ENCODE measurements at regions of chr17 and their contacts with region 1.

Region 1: GRCh38 chr17:43483674-43484372 is at the start of gene DHX8:
- DNase-seq: peak; percentile 97
- ATAC-seq: peak; percentile 96
- H3K4me3 ChIP-seq: peak within 1 kb of the TSS; percentile 93
- H3K27ac ChIP-seq: peak within 1 kb of the TSS; percentile 96
- H3K4me1 ChIP-seq: peaks cover 13% of the 10 kb centered on the region
- H3K27me3 ChIP-seq: no peaks in the 10 kb centered on the region
- CTCF ChIP-seq: peak; percentile 100; a peak in 5 of 6 replicates
- EP300 ChIP-seq: peak in 1 of 2 experiments; percentile 43; a peak in 1 of 4 replicates
- POLR2A ChIP-seq: peak; percentile 91
- RAD21 ChIP-seq: peak; percentile 99
- polyA plus RNA-seq, gene DHX8: 27.6 to 31.6 TPM

Region 2: DNA sequence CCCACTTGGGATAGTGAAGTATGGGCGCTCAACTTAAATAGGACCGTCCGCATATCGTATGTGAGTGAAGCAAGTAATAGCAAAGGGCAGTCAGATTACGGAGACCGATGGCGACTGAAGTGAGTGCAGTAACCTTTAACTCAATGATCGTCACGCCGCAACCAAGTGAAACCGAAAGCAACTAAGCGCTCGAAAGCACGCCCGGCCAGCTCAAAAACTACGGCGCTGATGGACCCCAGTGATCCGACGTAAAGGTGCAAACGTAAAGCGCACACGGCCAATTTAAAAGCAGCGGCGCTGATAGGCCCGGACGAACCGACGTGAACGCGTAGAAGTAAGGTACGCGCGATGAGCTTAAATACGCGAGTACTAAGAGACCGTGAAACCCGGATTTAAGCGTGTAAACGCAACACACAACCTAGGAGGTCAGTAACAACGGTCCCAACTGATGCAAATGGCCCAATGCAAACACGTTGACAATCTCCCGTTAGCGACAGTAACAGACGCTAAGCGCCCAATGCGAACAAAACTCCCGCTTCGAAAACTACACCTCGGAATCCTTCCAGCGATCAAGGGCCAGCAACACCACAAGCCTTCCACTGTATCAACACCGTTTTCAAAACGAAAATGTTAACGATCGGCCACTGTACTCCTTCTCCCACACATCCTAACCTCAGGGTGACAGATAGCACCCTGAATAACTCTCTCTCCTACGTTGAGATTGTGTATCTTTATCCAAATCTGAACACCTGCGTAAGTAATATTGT is 122.9 kb before region 1 on chr17:
- CTCF ChIA-PET with region 1: interaction called, 25 read pairs
- POLR2A ChIA-PET with region 1: interaction called, 3 read pairs
- RAD21 ChIA-PET with region 1: interaction called, 4 read pairs
- SMC1A ChIA-PET with region 1: interaction called, 13 read pairs
- in situ Hi-C with region 1: no loop called
- intact Hi-C with region 1: no loop called
- DNase-seq: peak; percentile 100
- ATAC-seq: peak; percentile 96
- H3K4me3 ChIP-seq: peak overlapping the region; percentile 73
- H3K27ac ChIP-seq: peak overlapping the region; percentile 93
- H3K4me1 ChIP-seq: no peaks in the 10 kb centered on the region
- H3K27me3 ChIP-seq: no peaks in the 10 kb centered on the region
- CTCF ChIP-seq: peak in 1 of 3 experiments; percentile 2; a peak in 1 of 6 replicates
- EP300 ChIP-seq: peak in 1 of 2 experiments; percentile 66; a peak in 2 of 4 replicates
- POLR2A ChIP-seq: peak; percentile 99
- RAD21 ChIP-seq: 0 out of 2 replicates have a peak, but pooled peaks have one; percentile 6

Region 3: DNA sequence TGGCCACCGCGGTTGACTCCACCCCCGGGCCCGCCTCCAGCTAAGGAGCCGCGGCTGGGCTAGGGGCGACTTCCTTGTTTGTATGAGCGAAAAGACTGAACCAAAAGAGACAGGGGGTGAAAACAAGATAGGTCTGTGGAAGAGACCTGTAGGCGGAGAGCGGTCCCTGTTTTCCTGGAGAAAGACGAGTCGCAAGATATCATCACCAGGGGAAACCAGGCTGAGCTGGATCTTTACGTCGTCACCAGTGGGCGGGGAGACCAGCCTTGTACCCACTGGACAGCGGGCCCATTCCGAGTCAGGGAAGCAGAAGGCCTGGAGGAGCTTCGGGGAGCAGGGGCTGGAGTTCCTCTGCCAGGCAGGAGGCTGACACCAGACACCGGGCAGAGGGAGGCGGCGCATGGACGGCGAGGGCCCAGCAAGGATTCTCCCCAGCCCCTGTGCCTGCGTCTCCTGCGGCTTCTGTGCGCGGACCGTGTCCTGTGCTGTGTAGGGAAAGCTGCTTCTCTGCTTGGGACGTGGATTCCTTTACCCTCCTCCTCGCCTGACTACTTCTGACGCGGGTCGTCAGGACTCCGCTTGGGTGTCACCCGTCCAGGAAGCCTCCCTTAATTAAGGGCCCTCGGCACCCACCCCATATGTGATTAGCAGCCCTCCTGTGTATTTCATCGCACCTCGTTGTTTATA is 95.3 kb before region 1 on chr17:
- CTCF ChIA-PET with region 1: interaction called, 248 read pairs
- POLR2A ChIA-PET with region 1: interaction called, 10 read pairs
- RAD21 ChIA-PET with region 1: interaction called, 79 read pairs
- SMC1A ChIA-PET with region 1: interaction called, 117 read pairs
- in situ Hi-C with region 1: loop called (anchors 5 kb)
- intact Hi-C with region 1: no loop called
- DNase-seq: peak; percentile 75
- ATAC-seq: peak; percentile 90
- H3K4me3 ChIP-seq: peak overlapping the region; percentile 70
- H3K27ac ChIP-seq: peak overlapping the region; percentile 97
- H3K4me1 ChIP-seq: peaks cover 4% of the 10 kb centered on the region
- H3K27me3 ChIP-seq: no peaks in the 10 kb centered on the region
- CTCF ChIP-seq: no peak
- EP300 ChIP-seq: peak in 1 of 2 experiments; percentile 15; a peak in 1 of 4 replicates
- POLR2A ChIP-seq: peak; percentile 79
- RAD21 ChIP-seq: no peak

Region 4: DNA sequence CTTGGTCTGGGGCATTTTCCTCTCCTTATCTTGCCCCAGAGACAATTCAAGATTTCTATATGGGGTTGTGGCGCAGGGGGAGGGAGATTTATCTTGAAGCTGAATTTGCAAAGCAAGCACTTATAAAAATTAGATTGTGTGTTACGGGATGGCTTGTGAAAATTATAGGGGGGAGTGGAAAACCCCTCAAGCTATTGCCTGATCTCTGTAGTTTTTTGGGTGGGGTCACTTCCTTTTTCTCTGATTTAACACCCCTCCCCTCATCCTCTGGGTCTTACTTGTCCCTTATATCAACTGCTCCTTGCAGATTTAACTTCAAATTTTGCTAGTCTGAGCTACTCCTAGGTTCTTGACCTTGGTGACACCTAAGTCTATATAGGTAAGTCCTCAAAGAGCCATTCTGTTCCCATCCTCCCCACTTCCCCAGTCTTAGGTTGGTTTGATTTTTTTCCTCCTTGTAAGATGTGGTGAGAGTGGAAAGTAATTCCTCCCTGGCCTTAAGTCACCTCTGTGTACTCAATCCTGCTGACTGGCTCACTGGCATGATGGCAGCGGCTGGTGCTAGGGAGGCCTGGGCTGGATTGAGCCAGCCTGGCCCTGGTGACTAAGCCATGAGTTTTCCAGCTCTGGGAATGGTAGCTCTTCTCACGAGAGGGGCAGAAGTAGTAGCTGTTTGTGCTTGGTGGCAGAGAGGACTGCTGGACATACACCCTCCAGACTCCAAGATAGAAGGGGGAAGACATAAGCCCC is 82.7 kb before region 1 on chr17:
- CTCF ChIA-PET with region 1: interaction called, 248 read pairs
- POLR2A ChIA-PET with region 1: interaction called, 5 read pairs
- RAD21 ChIA-PET with region 1: interaction called, 79 read pairs
- SMC1A ChIA-PET with region 1: interaction called, 117 read pairs
- in situ Hi-C with region 1: no loop called
- intact Hi-C with region 1: loop called (anchors 5 kb)
- DNase-seq: no peak
- ATAC-seq: no peak
- H3K4me3 ChIP-seq: no peak overlapping the region
- H3K27ac ChIP-seq: no peak overlapping the region
- H3K4me1 ChIP-seq: no peaks in the 10 kb centered on the region
- H3K27me3 ChIP-seq: no peaks in the 10 kb centered on the region
- CTCF ChIP-seq: no peak
- EP300 ChIP-seq: no peak
- POLR2A ChIP-seq: no peak
- RAD21 ChIP-seq: no peak

Region 5: DNA sequence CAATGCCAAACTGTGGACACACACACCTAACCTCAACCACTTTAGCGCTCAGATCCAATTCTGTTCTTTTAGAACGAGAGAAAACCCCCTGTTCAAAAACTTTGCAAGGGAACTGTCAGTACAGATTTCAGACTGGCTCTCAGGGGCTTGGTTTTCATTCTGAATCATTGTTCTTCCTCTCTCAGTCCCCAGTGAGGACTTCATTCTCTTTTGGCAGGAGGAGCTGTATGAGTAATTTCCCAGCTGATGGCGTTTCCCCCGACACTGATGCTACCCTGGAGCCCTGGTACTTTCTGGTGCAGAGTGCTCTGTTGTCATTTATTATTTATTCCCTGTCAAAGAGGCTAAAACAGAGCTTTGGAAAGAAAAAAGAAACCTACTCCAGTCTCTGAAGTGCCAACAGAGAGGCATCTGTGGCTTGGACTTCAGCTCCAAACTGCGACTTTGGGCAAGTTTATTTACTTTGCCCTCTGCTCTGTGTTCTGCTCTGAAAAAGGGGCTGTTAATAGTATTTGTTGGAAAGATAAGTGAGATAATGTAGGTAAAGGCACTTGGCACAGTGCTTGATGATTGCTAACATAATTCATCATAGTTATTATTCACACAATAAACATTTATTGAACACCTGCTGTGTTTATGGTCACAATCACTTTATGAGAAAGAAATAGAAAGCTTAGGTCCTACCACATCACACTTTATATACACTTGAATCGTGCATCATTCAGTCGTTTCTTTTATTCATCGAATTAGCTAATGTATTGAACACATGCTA is 34.0 kb after region 1 on chr17:
- CTCF ChIA-PET with region 1: interaction called, 11 read pairs
- POLR2A ChIA-PET with region 1: no interaction called
- RAD21 ChIA-PET with region 1: interaction called, 4 read pairs
- SMC1A ChIA-PET with region 1: interaction called, 9 read pairs
- in situ Hi-C with region 1: no loop called
- intact Hi-C with region 1: no loop called
- DNase-seq: peak; percentile 82
- ATAC-seq: peak; percentile 93
- H3K4me3 ChIP-seq: no peak overlapping the region
- H3K27ac ChIP-seq: peak overlapping the region; percentile 91
- H3K4me1 ChIP-seq: peaks cover 20% of the 10 kb centered on the region
- H3K27me3 ChIP-seq: no peaks in the 10 kb centered on the region
- CTCF ChIP-seq: no peak
- EP300 ChIP-seq: no peak
- POLR2A ChIP-seq: no peak
- RAD21 ChIP-seq: no peak

Region 6: GRCh38 chr17:43528349-43528987 is 44.6 kb after region 1 on chr17:
- CTCF ChIA-PET with region 1: no interaction called
- POLR2A ChIA-PET with region 1: no interaction called
- RAD21 ChIA-PET with region 1: no interaction called
- SMC1A ChIA-PET with region 1: no interaction called
- in situ Hi-C with region 1: no loop called
- intact Hi-C with region 1: no loop called
- DNase-seq: no peak
- ATAC-seq: no peak
- H3K4me3 ChIP-seq: no peak overlapping the region
- H3K27ac ChIP-seq: no peak overlapping the region
- H3K4me1 ChIP-seq: no peaks in the 10 kb centered on the region
- H3K27me3 ChIP-seq: no peaks in the 10 kb centered on the region
- CTCF ChIP-seq: no peak
- EP300 ChIP-seq: no peak
- POLR2A ChIP-seq: no peak; the same call in 1 of the 2 replicates
- RAD21 ChIP-seq: no peak

Region 7: DNA sequence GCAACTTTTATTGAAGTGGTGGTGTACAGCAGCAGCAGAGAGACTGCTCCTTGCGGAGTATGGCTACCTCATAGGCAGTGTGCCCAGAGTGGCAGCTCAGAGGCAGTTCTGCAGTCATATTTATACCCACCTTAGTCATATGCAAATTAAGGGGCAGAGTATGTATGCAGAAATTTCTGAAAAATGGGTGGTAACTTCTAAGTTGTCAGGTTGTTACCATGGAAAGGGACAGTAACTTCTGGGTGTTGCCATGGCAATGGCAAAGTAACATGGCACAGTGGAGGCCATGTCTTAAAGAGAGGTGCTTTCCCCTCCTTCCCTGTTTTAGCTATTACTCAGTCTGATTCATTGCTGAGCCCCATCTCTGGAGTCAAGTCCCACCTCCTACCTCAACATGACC is 124.5 kb after region 1 on chr17:
- CTCF ChIA-PET with region 1: no interaction called
- POLR2A ChIA-PET with region 1: no interaction called
- RAD21 ChIA-PET with region 1: no interaction called
- SMC1A ChIA-PET with region 1: no interaction called
- in situ Hi-C with region 1: no loop called
- intact Hi-C with region 1: no loop called
- DNase-seq: peak; percentile 28
- ATAC-seq: peak; percentile 90
- H3K4me3 ChIP-seq: no peak overlapping the region
- H3K27ac ChIP-seq: no peak overlapping the region
- H3K4me1 ChIP-seq: no peaks in the 10 kb centered on the region
- H3K27me3 ChIP-seq: no peaks in the 10 kb centered on the region; a peak in 1 of 4 replicates
- CTCF ChIP-seq: no peak
- EP300 ChIP-seq: no peak
- POLR2A ChIP-seq: no peak
- RAD21 ChIP-seq: no peak

Region 8: GRCh38 chr17:43673516-43674323 is 189.9 kb after region 1 on chr17:
- CTCF ChIA-PET with region 1: interaction called, 9 read pairs
- POLR2A ChIA-PET with region 1: interaction called, 3 read pairs
- RAD21 ChIA-PET with region 1: interaction called, 4 read pairs
- SMC1A ChIA-PET with region 1: interaction called, 13 read pairs
- in situ Hi-C with region 1: no loop called
- intact Hi-C with region 1: no loop called
- DNase-seq: no peak
- ATAC-seq: peak; percentile 48
- H3K4me3 ChIP-seq: no peak overlapping the region
- H3K27ac ChIP-seq: no peak overlapping the region
- H3K4me1 ChIP-seq: peaks cover 42% of the 10 kb centered on the region
- H3K27me3 ChIP-seq: no peaks in the 10 kb centered on the region
- CTCF ChIP-seq: peak; percentile 92 to 97 (median 94)
- EP300 ChIP-seq: no peak
- POLR2A ChIP-seq: no peak
- RAD21 ChIP-seq: peak; percentile 76

Region 9: DNA sequence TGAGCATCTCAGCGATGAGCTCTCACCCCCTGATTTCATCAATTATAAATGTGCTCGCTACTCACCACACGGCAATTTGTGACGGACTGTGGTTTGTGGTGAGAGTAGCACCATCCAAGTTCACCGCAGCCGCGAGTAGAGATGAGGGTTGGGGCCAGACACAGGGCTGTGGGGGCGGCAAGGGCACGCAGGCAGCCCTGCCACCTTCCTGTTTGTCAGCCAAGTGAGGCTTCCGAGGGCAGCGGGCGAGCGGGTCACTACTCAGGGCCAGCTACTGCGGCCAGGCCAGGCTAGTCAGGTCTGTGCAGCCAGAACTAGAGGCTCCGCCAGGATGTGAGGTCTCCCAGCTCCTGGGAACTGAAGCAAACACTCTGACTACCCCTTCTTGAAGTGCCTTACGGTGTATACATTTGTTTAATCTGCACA is 217.5 kb after region 1 on chr17:
- CTCF ChIA-PET with region 1: no interaction called
- POLR2A ChIA-PET with region 1: no interaction called
- RAD21 ChIA-PET with region 1: no interaction called
- SMC1A ChIA-PET with region 1: no interaction called
- in situ Hi-C with region 1: no loop called
- intact Hi-C with region 1: no loop called
- DNase-seq: peak; percentile 45
- ATAC-seq: peak; percentile 97
- H3K4me3 ChIP-seq: no peak overlapping the region
- H3K27ac ChIP-seq: no peak overlapping the region
- H3K4me1 ChIP-seq: peaks cover 8% of the 10 kb centered on the region
- H3K27me3 ChIP-seq: peaks cover 0 to 2% of the 10 kb centered on the region in 2 experiments; a peak in 1 of 4 replicates
- CTCF ChIP-seq: no peak
- EP300 ChIP-seq: peak; percentile 72 to 76; a peak in 3 of 4 replicates
- POLR2A ChIP-seq: no peak
- RAD21 ChIP-seq: no peak